Gastrocnemius medialis (tissue), 4 donors: ENCODE measurements at regions of chr17 and their contacts with region 1.

Region 1: GRCh38 chr17:43766413-43767052 is 7.9 kb upstream of the SOST start:
- DNase-seq: no peak
- ATAC-seq: no peak
- H3K4me3 ChIP-seq: no peak overlapping the region
- H3K27ac ChIP-seq: peak overlapping the region; percentile 57 to 99 (median 66)
- H3K4me1 ChIP-seq: peaks cover 15 to 16% of the 10 kb centered on the region in 2 donors
- H3K27me3 ChIP-seq: no peaks in the 10 kb centered on the region
- CTCF ChIP-seq: peak; percentile 45 to 88 (median 71)
- POLR2A ChIP-seq: no peak

Region 2: DNA sequence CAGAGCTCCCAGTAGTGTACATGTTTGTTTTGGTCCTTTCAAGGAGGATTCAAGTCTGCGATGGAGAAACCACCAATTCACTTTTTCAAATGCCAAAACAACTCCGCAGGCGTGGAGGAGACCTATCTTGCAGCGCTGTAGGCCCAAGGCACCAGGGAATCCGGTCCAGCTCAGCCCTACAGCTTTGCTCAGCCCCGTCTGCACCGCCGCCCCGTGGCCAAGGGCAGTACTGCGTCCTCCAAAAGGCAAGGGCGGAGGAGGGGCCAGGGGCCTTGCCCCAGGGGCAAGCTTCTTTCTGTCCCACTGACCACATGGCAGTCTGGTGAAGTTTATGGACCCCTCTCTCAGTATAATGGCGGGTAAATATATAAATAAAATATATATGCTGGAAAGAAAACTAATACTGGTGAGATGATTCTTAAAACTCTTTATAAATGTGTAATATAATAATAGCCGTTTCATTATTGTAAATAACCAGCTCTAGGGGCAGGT is 79.7 kb after region 1 on chr17:
- in situ Hi-C with region 1: no loop called
- intact Hi-C with region 1: loop called (anchors 2 kb)
- DNase-seq: peak; percentile 67 to 79
- ATAC-seq: peak; percentile 73 to 86
- H3K4me3 ChIP-seq: peak overlapping the region in 2 of 4 donors; percentile 12 to 47
- H3K27ac ChIP-seq: peak overlapping the region; percentile 5 to 64 (median 48)
- H3K4me1 ChIP-seq: peaks cover 10% of the 10 kb centered on the region in 2 donors
- H3K27me3 ChIP-seq: peaks cover 0 to 3% (median 0%) of the 10 kb centered on the region in 3 donors
- CTCF ChIP-seq: peak; percentile 93 to 99 (median 94)
- POLR2A ChIP-seq: no peak